Posterior vena cava (tissue), 2 donors: ENCODE measurements at regions of chr1 and their contacts with region 1.

Region 1: GRCh38 chr1:69567652-69568420 is at the start of gene LRRC7:
- DNase-seq: peak; percentile 76
- total RNA-seq, gene LRRC7: 4.2 to 9.5 TPM

Region 2: DNA sequence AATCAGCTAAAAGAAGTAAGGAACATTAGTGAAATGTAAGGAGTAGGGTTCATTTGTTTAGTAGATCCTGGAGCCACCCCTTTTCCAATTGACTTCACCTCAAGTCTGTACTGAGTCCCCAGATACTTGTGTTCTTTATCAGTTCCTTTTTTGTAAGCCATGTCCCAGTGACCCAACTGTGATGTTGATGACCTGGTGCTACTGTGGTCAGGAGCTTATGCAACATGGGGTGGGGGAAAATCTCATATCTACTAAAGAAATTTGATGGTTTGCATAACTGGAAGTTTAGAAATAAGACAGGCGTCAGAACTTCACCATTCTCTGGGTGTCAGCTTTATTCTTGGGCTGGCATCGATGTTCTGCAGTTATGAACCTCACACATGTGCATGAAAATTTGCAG is 120.4 kb after region 1 on chr1:
- intact Hi-C with region 1: no loop called
- DNase-seq: no peak

Region 3: GRCh38 chr1:69728206-69728605 is 160.4 kb after region 1 on chr1:
- intact Hi-C with region 1: loop called in 1 of 2 experiments (anchors 10 kb)
- DNase-seq: no peak